PC-3 (cell line): ENCODE measurements at regions of chr17 and their contacts with region 1.

Region 1: GRCh38 chr17:65794572-65794971 is 233.1 kb upstream of the AXIN2 start:
- DNase-seq: peak; percentile 82
- ATAC-seq: peak; percentile 81
- H3K4me3 ChIP-seq: no peak overlapping the region
- H3K27ac ChIP-seq: no peak overlapping the region
- H3K4me1 ChIP-seq: no peaks in the 10 kb centered on the region
- H3K27me3 ChIP-seq: no peaks in the 10 kb centered on the region
- CTCF ChIP-seq: peak; percentile 88

Region 2: DNA sequence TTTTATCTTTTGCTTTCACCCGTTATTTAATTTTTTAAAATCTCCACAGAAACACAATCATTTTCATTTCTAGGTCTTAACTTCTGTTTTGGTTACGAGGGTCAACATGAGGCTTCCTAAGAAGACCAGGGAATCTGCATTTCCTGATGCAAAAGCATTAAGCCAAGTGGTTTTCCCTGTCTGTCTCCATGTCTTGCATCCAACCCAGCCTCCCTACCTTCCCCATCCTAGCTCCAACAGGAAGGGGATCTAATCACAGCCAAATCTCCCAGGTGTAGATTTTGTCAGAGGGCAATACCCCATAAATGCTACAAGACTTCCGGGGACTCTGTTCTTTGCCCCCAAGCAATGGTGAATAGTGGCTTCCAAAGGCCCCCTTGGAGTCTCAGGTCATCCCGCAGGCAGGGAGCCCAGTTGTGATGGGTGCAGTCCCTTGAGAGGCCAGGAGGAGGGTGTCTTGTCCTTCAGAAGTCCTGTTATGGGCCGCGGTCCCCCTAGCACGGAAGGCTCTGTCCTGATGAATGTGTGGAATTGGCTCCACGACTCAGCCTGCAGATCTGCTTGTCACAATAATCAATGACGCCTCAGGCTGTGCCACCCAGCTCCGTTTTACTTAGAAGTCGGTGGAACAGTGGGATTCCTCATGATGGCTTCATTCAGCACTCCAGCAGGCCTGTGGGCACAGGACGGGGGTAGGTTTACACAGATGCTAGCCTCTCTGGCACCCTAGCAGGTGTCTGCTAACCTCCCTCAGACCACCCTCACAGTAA is 516.3 kb before region 1 on chr17:
- CTCF ChIA-PET with region 1: no interaction called
- POLR2A ChIA-PET with region 1: no interaction called
- intact Hi-C with region 1: loop called (anchors 1 kb)
- DNase-seq: peak; percentile 79
- ATAC-seq: peak; percentile 96
- H3K4me3 ChIP-seq: no peak overlapping the region
- H3K27ac ChIP-seq: no peak overlapping the region
- H3K4me1 ChIP-seq: peaks cover 7% of the 10 kb centered on the region; the same call in 1 of the 2 replicates
- H3K27me3 ChIP-seq: no peaks in the 10 kb centered on the region
- CTCF ChIP-seq: peak; percentile 95

Region 3: DNA sequence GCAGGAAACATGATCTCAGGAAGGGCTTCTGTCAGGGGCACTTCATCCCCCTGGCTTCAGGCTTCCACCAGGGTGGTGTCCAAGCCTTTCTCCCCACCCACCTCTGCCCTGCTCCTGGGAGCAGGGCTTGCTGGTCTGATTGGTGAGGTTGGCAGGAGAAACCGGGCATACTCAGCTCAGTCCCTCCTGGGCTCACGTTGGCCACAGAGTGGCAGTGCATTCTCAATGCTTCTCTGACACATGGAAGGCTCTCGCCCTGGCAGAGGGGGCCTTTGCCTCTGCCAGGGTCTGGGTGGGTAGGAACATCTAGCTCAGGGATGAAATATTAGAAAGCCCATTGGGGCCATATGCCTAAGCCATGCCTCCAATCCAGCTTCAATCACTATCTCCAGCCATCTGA is 375.9 kb before region 1 on chr17:
- CTCF ChIA-PET with region 1: no interaction called
- POLR2A ChIA-PET with region 1: no interaction called
- intact Hi-C with region 1: loop called (anchors 10 kb)
- DNase-seq: peak; percentile 20
- ATAC-seq: peak; percentile 76
- H3K4me3 ChIP-seq: no peak overlapping the region
- H3K27ac ChIP-seq: no peak overlapping the region
- H3K4me1 ChIP-seq: no peaks in the 10 kb centered on the region
- H3K27me3 ChIP-seq: no peaks in the 10 kb centered on the region
- CTCF ChIP-seq: peak; percentile 43; the same call in 1 of the 2 replicates